OCI-LY7 (cell line): ENCODE measurements at regions of chr12 and their contacts with region 1.

Region 1: GRCh38 chr12:50222275-50222795 is 55.2 kb upstream of the CERS5 start:
- DNase-seq: peak; percentile 50
- H3K4me3 ChIP-seq: peak overlapping the region; percentile 72
- H3K27ac ChIP-seq: peak overlapping the region; percentile 86
- H3K4me1 ChIP-seq: peaks cover 39% of the 10 kb centered on the region
- CTCF ChIP-seq: no peak; the same call in 1 of the 2 replicates

Region 2: GRCh38 chr12:49842519-49843352 is 379.6 kb before region 1 on chr12 and contains the start of gene BCDIN3D:
- CTCF ChIA-PET with region 1: no interaction called
- POLR2A ChIA-PET with region 1: no interaction called
- intact Hi-C with region 1: loop called (anchors 5 kb)
- DNase-seq: peak; percentile 89
- H3K4me3 ChIP-seq: peak within 1 kb of the TSS; percentile 92
- H3K27ac ChIP-seq: peak within 1 kb of the TSS; percentile 74
- H3K4me1 ChIP-seq: peaks cover 34% of the 10 kb centered on the region
- CTCF ChIP-seq: no peak
- total RNA-seq, gene BCDIN3D: 7.5 and 8.4 TPM in 2 replicates

Region 3: GRCh38 chr12:50211392-50212070 is 10.8 kb before region 1 on chr12:
- CTCF ChIA-PET with region 1: interaction called, 6 read pairs
- POLR2A ChIA-PET with region 1: interaction called, 50 read pairs
- intact Hi-C with region 1: no loop called
- DNase-seq: peak; percentile 21
- H3K4me3 ChIP-seq: no peak overlapping the region
- H3K27ac ChIP-seq: peak overlapping the region; percentile 45
- H3K4me1 ChIP-seq: peaks cover 39% of the 10 kb centered on the region
- CTCF ChIP-seq: peak; percentile 31; the same call in 1 of the 2 replicates

Region 4: DNA sequence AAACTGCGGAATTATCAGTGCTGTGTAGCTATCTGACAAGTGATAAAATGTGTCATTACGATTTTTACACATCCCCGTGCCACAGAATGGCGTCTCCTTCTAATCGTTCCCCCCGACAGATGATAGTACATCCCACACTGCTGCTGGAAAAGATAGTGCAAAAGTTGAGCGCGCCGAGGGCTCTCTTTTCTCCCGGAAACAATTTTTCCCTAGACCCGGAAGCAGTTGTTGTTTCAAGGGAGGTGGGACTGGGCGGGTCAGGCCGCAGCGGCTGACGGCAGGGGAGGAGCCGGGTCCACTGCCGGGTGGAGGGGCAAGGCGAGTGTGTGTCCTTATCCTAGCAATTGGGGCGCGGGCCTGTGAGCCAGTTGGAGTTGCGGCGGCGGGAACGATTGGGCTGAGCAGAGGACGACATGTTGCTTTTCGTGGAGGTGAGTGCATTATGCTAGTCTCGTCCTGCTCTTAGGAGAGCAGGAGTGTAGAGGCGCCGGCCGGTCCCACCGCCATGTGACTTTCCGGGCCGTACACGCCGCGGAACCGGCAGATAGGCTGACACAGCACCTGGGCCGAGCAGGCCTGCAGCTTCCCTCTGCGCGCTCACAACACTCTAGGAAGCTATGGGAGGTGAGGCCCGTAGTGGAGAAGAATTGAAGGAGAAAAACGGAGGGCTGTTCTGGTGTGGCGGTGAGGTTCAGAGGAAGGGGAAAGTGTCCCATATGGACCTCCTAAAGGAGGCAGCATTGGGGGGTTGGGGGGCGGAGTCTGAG is 178.4 kb after region 1 on chr12 and contains the start of gene LARP4:
- CTCF ChIA-PET with region 1: no interaction called
- POLR2A ChIA-PET with region 1: no interaction called
- intact Hi-C with region 1: loop called (anchors 5 kb)
- DNase-seq: peak; percentile 96
- H3K4me3 ChIP-seq: peak within 1 kb of the TSS; percentile 85
- H3K27ac ChIP-seq: peak within 1 kb of the TSS; percentile 81
- H3K4me1 ChIP-seq: peaks cover 12% of the 10 kb centered on the region
- CTCF ChIP-seq: no peak
- total RNA-seq, gene LARP4: 32.9 and 35.0 TPM in 2 replicates